Dorsolateral prefrontal cortex (tissue), 120 donors: ENCODE measurements at regions of chr19 and their contacts with region 1.

Region 1: DNA sequence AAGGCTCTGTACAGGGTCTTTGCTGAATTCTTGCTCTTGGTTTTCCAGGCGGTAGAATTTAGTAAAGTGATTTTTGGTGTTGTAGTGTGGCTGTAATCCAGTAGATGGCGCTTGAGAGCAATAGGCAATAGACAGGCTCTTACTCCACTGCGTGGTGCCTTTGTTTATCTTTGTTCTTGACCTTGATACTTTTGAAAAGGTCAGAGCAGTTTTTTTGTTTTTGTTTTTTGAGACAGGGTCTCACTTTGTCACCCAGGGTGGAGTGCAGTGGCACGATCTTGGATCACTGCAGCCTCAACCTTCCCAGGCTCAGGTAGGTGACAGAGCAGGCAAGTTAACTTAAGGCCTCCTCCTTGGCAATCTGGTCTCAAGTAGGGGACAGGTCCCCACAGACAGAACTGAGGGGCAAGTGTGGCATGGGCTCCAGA is 12.2 kb upstream of the LILRA5 start:
- DNase-seq: peak in 2 of 10 donors; percentile 7 to 31
- H3K4me3 ChIP-seq: no peak overlapping the region
- H3K27ac ChIP-seq: no peak overlapping the region
- H3K27me3 ChIP-seq: peaks cover 0 to 17% (median 0%) of the 10 kb centered on the region in 45 donors
- CTCF ChIP-seq: peak; percentile 62 to 94 (median 82)

Region 2: DNA sequence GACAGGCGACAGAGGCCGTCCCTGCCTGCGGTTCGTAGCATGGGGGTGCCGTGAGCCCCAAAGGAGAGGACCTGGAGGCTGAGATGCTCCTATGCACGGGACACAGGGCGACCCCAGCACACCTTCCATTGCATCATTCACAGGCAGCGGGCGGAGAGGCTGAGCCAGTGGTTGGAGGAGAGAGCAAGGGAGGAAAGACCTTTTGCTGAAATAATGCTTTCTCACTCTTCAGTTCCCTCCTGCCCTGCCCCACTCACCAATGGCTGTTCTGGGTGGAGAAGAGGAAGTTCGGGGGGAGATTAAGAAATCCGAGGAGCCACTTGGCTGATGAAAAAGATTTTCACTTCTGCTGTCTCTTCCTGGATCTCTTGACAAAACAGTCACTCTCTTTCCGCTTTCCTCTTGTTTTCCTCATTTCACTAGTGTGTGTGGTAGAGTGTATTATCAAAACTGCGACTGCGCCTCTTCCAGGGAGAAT is 501.0 kb before region 1 on chr19 and contains the start of gene NLRP12:
- intact Hi-C with region 1: loop called in 1 of 2 experiments (anchors 10 kb)
- DNase-seq: no peak
- H3K4me3 ChIP-seq: no peak within 1 kb of the TSS
- H3K27ac ChIP-seq: peak within 1 kb of the TSS in 3 of 59 donors; percentile 15 to 35 (median 29)
- H3K27me3 ChIP-seq: peaks cover 0 to 6% (median 0%) of the 10 kb centered on the region in 45 donors
- CTCF ChIP-seq: no peak
- total RNA-seq, gene NLRP12: 0.10 to 1.3 (median 0.25) TPM in 81 of 120 experiments, not detected in the others

Region 3: GRCh38 chr19:54390942-54391577 is 65.9 kb after region 1 on chr19:
- intact Hi-C with region 1: loop called in 1 of 2 experiments (anchors 10 kb)
- DNase-seq: peak in 4 of 10 donors; percentile 23 to 44 (median 29)
- H3K4me3 ChIP-seq: no peak overlapping the region
- H3K27ac ChIP-seq: no peak overlapping the region
- H3K27me3 ChIP-seq: peaks cover 0 to 38% (median 5%) of the 10 kb centered on the region in 45 donors
- CTCF ChIP-seq: peak; percentile 23 to 82 (median 73)

Region 4: GRCh38 chr19:54430306-54431254 is 105.4 kb after region 1 on chr19:
- intact Hi-C with region 1: loop called in 1 of 2 experiments (anchors 10 kb)
- DNase-seq: peak in 2 of 10 donors; percentile 55 to 70
- H3K4me3 ChIP-seq: peak overlapping the region in 30 of 59 donors; percentile 0 to 51 (median 26)
- H3K27ac ChIP-seq: peak overlapping the region; percentile 53 to 98 (median 83)
- H3K27me3 ChIP-seq: peaks cover 0 to 8% (median 0%) of the 10 kb centered on the region in 45 donors
- CTCF ChIP-seq: peak in 46 of 56 donors; percentile 9 to 55 (median 34)